H1 (cell line): ENCODE measurements at regions of chr16 and their contacts with region 1.

Region 1: GRCh38 chr16:1559446-1559975 is 26.0 kb downstream of the TMEM204 start:
- DNase-seq: no peak
- H3K4me3 ChIP-seq: no peak overlapping the region
- H3K27ac ChIP-seq: no peak overlapping the region
- H3K4me1 ChIP-seq: peaks cover 0 to 3% (median 0%) of the 10 kb centered on the region in 4 experiments; a peak in 1 of 7 replicates
- H3K27me3 ChIP-seq: no peaks in the 10 kb centered on the region
- CTCF ChIP-seq: no peak
- EP300 ChIP-seq: no peak
- POLR2A ChIP-seq: no peak
- RAD21 ChIP-seq: no peak

Region 2: GRCh38 chr16:1572671-1573070 is 13.2 kb after region 1 on chr16:
- CTCF ChIA-PET with region 1: interaction called, 10 read pairs
- POLR2A ChIA-PET with region 1: interaction called, 3 read pairs
- DNase-seq: no peak
- H3K4me3 ChIP-seq: no peak overlapping the region
- H3K27ac ChIP-seq: no peak overlapping the region
- H3K4me1 ChIP-seq: no peaks in the 10 kb centered on the region
- H3K27me3 ChIP-seq: no peaks in the 10 kb centered on the region
- CTCF ChIP-seq: no peak
- EP300 ChIP-seq: no peak
- POLR2A ChIP-seq: no peak
- RAD21 ChIP-seq: no peak